ENCODE measurements at regions of chr12 and their contacts with region 1.

Region 1: DNA sequence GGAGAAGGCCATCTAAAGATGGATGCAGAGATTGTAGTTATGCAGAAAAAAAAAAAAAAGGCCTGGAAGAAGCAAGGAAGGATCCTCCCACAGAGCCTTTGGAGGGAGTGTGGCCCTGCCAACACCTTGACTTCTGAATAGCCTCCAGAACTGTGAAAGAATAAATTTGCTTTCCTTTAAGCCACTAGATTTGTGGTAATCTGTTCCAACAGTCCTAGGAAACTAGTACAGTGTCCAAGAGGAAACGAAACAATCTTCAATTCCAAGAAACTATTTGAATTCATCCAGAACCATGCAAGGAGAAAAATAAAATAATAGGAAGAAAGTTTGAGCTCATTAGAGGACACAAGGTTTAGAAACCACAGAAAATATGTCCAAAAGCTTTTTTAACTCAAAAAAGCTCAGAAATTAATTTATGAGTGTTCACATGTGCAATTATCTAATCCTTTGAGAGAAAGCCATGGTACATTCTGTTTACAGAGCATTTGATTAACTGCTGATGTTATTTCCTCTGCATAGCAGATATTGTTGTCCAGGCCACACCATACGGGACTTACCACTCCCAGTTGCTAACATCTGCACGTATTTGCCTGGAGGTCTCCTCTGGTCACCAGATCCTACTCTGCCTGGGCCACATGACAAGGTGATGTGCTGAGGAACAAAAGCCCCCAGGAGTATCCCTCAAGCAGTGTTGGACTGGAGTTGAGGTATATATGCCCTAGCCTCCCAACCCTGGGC is 30.0 kb upstream of the STAB2 start:
- DNase-seq: no peak
- ATAC-seq: peak; percentile 32 to 75 (median 51)
- H3K4me3 ChIP-seq: no peak overlapping the region
- H3K27ac ChIP-seq: no peak overlapping the region
- H3K4me1 ChIP-seq: no peaks in the 10 kb centered on the region
- H3K27me3 ChIP-seq: no peaks in the 10 kb centered on the region
- CTCF ChIP-seq: no peak
- POLR2A ChIP-seq: no peak

Region 2: DNA sequence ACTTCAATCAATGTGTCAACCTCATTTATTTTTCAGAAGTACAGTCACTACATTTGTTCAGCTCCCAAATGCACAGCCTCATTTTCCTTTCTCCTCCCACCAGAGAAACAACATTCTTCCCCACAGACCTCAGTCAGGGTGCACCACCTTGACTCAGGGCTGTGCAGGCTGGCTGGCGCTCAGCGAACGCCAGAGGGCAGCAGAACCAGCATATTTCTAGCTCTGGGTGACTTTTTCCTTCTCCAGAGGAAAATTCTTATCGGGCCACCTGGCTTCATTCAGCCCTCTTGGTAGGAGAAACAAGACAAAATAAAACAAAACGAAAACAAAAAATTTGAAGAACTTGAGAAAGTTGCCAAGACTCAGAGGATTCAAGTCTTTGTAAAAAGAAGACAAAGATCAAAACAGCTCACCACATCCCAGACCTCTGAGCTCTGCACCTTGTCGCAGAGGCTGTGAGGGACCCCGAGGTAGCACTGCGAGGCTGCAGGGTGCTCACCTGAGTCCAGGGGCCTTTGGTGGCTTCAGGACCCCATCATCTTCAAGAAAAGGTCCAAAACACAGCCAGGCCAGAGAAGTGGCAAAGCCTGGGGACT is 673.8 kb before region 1 on chr12:
- intact Hi-C with region 1: loop called in 1 of 2 experiments (anchors 10 kb)
- DNase-seq: peak in 2 of 3 donors; percentile 67
- ATAC-seq: peak; percentile 32 to 68 (median 59)
- H3K4me3 ChIP-seq: no peak overlapping the region
- H3K27ac ChIP-seq: peak overlapping the region in 1 of 3 donors; percentile 29
- H3K4me1 ChIP-seq: peaks cover 0 to 47% (median 18%) of the 10 kb centered on the region in 4 donors
- H3K27me3 ChIP-seq: no peaks in the 10 kb centered on the region
- CTCF ChIP-seq: peak; percentile 66 to 87 (median 80)
- POLR2A ChIP-seq: no peak

Region 3: GRCh38 chr12:102948941-102949352 is 608.1 kb before region 1 on chr12:
- intact Hi-C with region 1: loop called (anchors 10 kb)
- DNase-seq: peak in 2 of 3 donors; percentile 58 to 66
- ATAC-seq: peak in 1 of 4 donors; percentile 13
- H3K4me3 ChIP-seq: no peak overlapping the region
- H3K27ac ChIP-seq: no peak overlapping the region
- H3K4me1 ChIP-seq: peaks cover 0 to 15% (median 6%) of the 10 kb centered on the region in 4 donors
- H3K27me3 ChIP-seq: no peaks in the 10 kb centered on the region
- CTCF ChIP-seq: peak; percentile 88 to 97 (median 90)
- POLR2A ChIP-seq: no peak

Region 4: DNA sequence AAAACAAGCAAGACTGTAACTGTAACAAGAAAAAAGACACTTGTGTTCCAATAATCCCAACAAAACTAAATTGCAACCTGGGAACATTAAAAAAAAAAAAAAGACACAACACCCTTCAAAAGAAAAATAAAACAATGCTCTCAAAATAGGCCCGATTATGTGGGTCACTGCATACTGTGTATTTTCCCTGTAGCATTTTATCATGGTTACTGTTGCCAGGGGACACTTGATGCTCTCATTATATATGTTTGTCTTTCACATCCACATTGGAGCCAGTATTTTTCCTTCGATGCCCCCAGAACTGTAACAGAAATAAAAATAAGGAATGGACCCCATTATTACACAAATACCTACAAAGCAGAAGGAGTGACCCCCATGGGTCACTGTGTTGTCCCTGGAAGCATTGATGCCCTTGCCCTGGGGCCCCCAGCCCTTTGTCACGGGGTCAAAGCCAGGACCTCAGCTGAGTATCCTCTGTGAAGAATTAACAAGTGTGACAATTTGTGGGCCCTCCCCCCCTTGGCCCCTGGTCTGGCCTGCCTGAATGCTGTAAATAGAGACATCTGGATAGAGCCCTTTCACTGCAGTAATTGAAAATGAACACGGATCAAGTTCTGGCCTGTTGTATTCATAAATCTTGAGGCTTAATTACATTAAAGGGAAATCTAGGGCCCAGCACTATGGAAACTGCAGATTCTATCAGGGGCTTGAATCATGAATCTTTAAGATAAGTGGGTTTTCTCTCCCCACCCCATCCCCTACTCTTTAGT is 134.1 kb before region 1 on chr12:
- intact Hi-C with region 1: no loop called
- DNase-seq: no peak
- ATAC-seq: no peak
- H3K4me3 ChIP-seq: no peak overlapping the region
- H3K27ac ChIP-seq: no peak overlapping the region
- H3K4me1 ChIP-seq: no peaks in the 10 kb centered on the region
- H3K27me3 ChIP-seq: no peaks in the 10 kb centered on the region
- CTCF ChIP-seq: no peak
- POLR2A ChIP-seq: no peak

Region 5: DNA sequence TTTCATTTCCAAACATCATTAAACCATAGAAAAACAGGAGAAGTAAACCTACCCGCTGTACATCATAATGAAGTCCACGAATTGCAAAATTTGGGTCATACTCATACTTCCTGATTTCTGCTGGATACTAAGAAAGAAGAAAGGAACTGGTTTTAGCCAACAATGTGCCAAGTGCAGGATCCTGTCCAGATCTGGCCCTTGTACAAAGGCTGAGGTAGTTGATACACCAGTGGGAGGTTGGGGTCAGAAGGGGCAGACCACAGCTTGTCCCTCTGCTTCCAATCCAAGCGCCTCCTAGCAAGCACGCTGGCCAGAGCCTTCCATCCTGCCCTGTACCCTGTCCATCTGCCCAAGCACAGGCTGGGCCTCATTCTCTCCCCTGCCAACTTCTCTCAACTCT is 249.7 kb after region 1 on chr12:
- intact Hi-C with region 1: no loop called
- DNase-seq: peak in 1 of 3 donors; percentile 42
- ATAC-seq: peak; percentile 27 to 49 (median 32)
- H3K4me3 ChIP-seq: no peak overlapping the region
- H3K27ac ChIP-seq: no peak overlapping the region
- H3K4me1 ChIP-seq: peaks cover 0 to 4% (median 0%) of the 10 kb centered on the region in 4 donors
- H3K27me3 ChIP-seq: no peaks in the 10 kb centered on the region
- CTCF ChIP-seq: no peak
- POLR2A ChIP-seq: no peak